Gastrocnemius medialis (tissue), 4 donors: ENCODE measurements at regions of chr20 and their contacts with region 1.

Region 1: GRCh38 chr20:48853591-48854443 is 26.0 kb upstream of the PREX1 start:
- DNase-seq: peak; percentile 78 to 94
- ATAC-seq: peak; percentile 91 to 93
- H3K4me3 ChIP-seq: no peak overlapping the region
- H3K27ac ChIP-seq: peak overlapping the region; percentile 79 to 91 (median 84)
- H3K4me1 ChIP-seq: peaks cover 0 to 24% of the 10 kb centered on the region in 2 donors
- H3K27me3 ChIP-seq: no peaks in the 10 kb centered on the region
- CTCF ChIP-seq: no peak
- POLR2A ChIP-seq: no peak

Region 2: GRCh38 chr20:48892844-48893243 is 39.0 kb after region 1 on chr20:
- in situ Hi-C with region 1: no loop called
- intact Hi-C with region 1: loop called (anchors 2 kb)
- DNase-seq: peak; percentile 75 to 91
- ATAC-seq: peak; percentile 87 to 90
- H3K4me3 ChIP-seq: no peak overlapping the region
- H3K27ac ChIP-seq: peak overlapping the region; percentile 68 to 87 (median 80)
- H3K4me1 ChIP-seq: peaks cover 4 to 16% of the 10 kb centered on the region in 2 donors
- H3K27me3 ChIP-seq: no peaks in the 10 kb centered on the region
- CTCF ChIP-seq: no peak
- POLR2A ChIP-seq: no peak